ENCODE measurements at regions of chr1 and their contacts with region 1.

Region 1: DNA sequence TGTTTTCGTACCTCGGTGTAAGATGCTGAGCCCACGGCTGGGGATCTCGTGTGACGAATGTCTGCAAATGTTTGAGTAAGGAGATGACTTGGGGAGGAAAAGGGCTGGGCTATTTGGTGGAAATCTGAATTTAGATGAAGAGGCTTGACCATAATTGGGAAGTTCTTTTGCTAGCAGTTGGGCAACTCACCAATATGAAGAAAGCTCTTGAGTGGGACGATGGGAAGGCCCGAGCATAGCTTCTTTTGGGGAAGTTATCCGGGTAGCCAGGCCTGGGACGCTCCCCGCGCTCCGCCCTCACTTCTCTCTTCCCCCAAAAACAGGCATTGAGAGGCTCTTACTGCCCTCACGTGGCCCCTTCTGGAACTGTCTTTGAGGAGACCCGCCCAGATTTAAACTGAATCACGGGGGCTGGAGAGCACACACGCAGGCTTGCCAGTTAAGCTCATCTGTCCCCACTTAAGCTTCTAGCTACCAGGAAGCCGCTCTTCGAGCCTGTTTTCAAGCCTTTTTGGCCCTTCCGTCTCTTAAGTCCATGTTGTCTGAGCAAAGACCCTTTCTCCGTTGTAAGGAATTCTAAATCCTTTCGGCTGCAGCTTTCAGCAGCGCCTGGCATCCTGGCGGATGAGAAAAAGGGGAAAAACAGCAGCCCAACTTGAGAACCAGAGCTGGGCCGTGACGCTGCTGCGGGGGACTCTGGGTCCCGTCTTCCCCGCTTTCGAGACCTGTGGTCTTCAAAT is 93.1 kb downstream of the NID1 start:
- DNase-seq: peak; percentile 80
- ATAC-seq: peak; percentile 98
- H3K4me3 Mint-ChIP-seq: peak overlapping the region; percentile 78
- H3K27ac Mint-ChIP-seq: peak overlapping the region; percentile 96
- H3K4me1 Mint-ChIP-seq: peaks cover 19% of the 10 kb centered on the region
- H3K27me3 Mint-ChIP-seq: no peaks in the 10 kb centered on the region
- CTCF ChIP-seq: no peak

Region 2: GRCh38 chr1:235767795-235768194 is 203.9 kb before region 1 on chr1:
- CTCF ChIA-PET with region 1: interaction called, 12 read pairs
- POLR2A ChIA-PET with region 1: interaction called, 3 read pairs
- intact Hi-C with region 1: loop called (anchors 5 kb)
- DNase-seq: no peak
- ATAC-seq: peak; percentile 89
- H3K4me3 Mint-ChIP-seq: no peak overlapping the region
- H3K27ac Mint-ChIP-seq: no peak overlapping the region
- H3K4me1 Mint-ChIP-seq: peaks cover 20% of the 10 kb centered on the region
- H3K27me3 Mint-ChIP-seq: no peaks in the 10 kb centered on the region
- CTCF ChIP-seq: no peak

Region 3: GRCh38 chr1:235809688-235810397 is 161.9 kb before region 1 on chr1:
- CTCF ChIA-PET with region 1: interaction called, 16 read pairs
- POLR2A ChIA-PET with region 1: no interaction called
- intact Hi-C with region 1: no loop called
- DNase-seq: no peak
- ATAC-seq: no peak
- H3K4me3 Mint-ChIP-seq: no peak overlapping the region
- H3K27ac Mint-ChIP-seq: no peak overlapping the region
- H3K4me1 Mint-ChIP-seq: no peaks in the 10 kb centered on the region
- H3K27me3 Mint-ChIP-seq: no peaks in the 10 kb centered on the region
- CTCF ChIP-seq: no peak

Region 4: GRCh38 chr1:235843461-235843961 is 128.2 kb before region 1 on chr1:
- CTCF ChIA-PET with region 1: interaction called, 62 read pairs
- POLR2A ChIA-PET with region 1: interaction called, 14 read pairs
- intact Hi-C with region 1: loop called (anchors 1 kb)
- DNase-seq: no peak
- ATAC-seq: peak; percentile 60
- H3K4me3 Mint-ChIP-seq: no peak overlapping the region
- H3K27ac Mint-ChIP-seq: peak overlapping the region; percentile 62
- H3K4me1 Mint-ChIP-seq: peaks cover 86% of the 10 kb centered on the region
- H3K27me3 Mint-ChIP-seq: no peaks in the 10 kb centered on the region
- CTCF ChIP-seq: no peak

Region 5: DNA sequence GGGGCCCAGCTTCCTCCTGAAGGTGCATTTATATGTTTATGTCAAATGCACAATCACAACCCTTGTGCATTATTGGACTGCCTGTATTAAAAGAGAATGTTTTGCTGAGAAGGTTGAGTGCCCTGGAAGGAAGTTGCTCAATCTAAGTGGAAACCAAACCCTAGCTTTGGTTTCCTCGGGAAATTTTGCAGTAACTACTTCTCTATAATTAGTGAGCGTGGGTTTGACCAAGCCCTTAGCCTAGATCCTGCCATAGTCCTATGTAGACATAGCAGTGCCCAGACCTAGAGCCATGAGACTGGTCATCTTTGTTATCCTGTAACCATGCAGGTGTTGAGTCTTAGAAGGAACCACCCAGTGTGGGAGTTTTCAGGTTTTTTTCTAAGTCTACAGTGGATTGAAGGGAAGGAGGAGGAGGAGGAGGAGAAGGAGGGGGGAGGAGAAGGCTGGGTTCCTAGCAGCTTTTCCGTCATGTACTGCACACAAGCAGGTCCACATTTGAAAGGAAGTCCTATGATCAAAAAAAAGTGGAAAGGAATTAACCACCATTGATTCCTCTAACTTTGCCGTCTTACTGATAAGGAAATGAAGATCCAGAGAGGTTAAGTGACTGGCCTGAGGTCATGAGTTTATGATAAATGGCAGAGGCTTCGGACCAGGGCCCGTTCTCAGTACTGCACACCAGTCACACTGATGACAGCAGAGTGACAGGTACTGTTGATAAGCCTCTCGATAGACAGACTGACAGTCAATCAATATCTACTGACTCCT is 32.8 kb before region 1 on chr1:
- CTCF ChIA-PET with region 1: interaction called, 19 read pairs
- POLR2A ChIA-PET with region 1: interaction called, 6 read pairs
- intact Hi-C with region 1: no loop called
- DNase-seq: no peak
- ATAC-seq: peak; percentile 80
- H3K4me3 Mint-ChIP-seq: peak overlapping the region; percentile 76
- H3K27ac Mint-ChIP-seq: peak overlapping the region; percentile 86
- H3K4me1 Mint-ChIP-seq: peaks cover 90% of the 10 kb centered on the region
- H3K27me3 Mint-ChIP-seq: no peaks in the 10 kb centered on the region
- CTCF ChIP-seq: no peak

Region 6: DNA sequence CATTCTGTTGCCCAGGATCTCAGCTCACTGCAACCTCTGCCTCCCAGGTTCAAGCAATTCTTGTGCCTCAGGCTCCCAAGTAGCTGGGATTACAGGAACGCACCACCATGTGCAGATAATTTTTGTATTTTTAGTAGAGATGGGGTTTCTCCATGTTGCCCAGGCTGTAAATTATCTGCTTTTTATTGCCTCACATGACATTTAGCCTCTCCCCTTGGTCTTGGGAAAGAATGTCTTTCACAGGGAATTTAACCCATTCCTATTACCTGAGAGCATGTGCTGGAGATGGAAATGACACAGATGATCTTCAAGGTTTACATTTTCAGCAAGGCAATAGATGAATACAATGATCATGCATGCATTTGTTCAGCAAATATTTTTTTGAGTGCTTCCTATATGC is 17.4 kb after region 1 on chr1:
- CTCF ChIA-PET with region 1: no interaction called
- POLR2A ChIA-PET with region 1: no interaction called
- intact Hi-C with region 1: no loop called
- DNase-seq: no peak
- ATAC-seq: no peak
- H3K4me3 Mint-ChIP-seq: no peak overlapping the region
- H3K27ac Mint-ChIP-seq: no peak overlapping the region
- H3K4me1 Mint-ChIP-seq: no peaks in the 10 kb centered on the region
- H3K27me3 Mint-ChIP-seq: no peaks in the 10 kb centered on the region
- CTCF ChIP-seq: no peak

Region 7: DNA sequence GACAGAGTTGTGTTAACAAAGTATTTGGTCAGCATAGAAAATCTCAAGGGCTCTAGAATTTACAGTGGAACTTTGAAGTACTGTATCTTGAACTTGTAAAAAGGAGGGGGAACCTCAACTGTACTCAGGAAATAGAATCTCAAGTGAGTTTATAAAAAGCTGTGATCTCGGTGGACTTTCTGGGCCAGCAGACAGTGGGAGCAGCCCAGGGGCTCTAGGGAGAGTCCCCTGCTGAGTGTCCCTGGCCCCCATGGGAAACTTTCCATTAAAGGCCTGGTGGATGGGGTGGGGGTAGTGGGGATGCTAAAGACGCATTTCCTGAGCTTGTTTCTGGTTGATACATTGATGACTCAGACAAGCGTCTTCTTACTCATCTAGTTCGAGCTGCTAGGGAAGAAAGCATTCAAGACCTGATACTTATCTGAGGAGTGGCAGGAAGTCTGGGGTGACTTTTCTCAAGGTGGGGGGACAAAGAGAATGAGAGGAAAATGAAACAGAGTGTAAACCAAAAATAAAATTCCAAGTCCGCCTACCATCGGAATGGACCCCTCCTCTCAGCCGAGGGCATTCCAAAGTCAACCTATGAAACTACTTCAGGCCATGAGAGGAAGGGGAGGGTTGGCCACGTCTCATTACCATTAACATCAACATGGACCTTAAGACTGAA is 27.7 kb after region 1 on chr1:
- CTCF ChIA-PET with region 1: interaction called, 8 read pairs
- POLR2A ChIA-PET with region 1: interaction called, 6 read pairs
- intact Hi-C with region 1: loop called (anchors 1 kb)
- DNase-seq: no peak
- ATAC-seq: peak; percentile 89
- H3K4me3 Mint-ChIP-seq: peak overlapping the region; percentile 58
- H3K27ac Mint-ChIP-seq: peak overlapping the region; percentile 89
- H3K4me1 Mint-ChIP-seq: peaks cover 15% of the 10 kb centered on the region
- H3K27me3 Mint-ChIP-seq: peaks cover 3% of the 10 kb centered on the region
- CTCF ChIP-seq: no peak

Region 8: DNA sequence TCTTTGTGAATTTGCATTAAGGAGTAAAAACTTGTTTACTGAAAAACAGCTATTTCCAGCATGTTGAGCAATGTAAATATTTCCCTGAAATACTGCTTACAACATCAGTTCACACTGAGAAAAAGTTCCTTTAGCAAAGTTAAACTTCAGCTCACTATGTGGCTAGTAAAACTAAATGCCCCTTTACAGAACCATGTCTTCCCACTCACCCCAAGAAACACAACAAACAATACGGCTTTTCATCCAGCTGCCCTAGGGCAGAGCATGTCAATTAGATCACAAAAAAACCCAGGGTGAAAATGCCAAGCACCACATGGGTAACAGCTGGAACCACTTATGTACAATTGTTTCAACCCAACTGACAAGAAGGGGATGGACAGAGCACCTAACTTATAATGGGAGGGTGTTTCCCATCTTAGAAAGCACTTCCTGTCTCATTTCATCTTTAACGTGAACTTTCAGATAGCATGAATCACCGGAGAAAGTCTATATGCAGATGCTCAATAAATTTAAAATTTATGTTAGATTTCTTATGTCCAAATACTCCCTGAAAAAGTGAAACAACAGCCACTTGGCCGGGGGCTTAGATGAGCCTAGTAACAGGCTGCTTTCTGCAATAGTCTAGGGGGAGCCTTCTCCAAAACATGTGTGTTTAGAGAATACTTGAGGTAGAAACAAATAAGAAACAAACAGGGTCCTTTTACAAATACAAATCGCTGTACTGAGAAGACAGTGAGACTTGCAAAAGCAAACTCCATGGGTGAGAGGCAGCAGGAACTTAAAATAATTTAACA is 86.6 kb after region 1 on chr1:
- CTCF ChIA-PET with region 1: no interaction called
- POLR2A ChIA-PET with region 1: no interaction called
- intact Hi-C with region 1: no loop called
- DNase-seq: no peak
- ATAC-seq: peak; percentile 10
- H3K4me3 Mint-ChIP-seq: no peak overlapping the region
- H3K27ac Mint-ChIP-seq: no peak overlapping the region
- H3K4me1 Mint-ChIP-seq: peaks cover 7% of the 10 kb centered on the region
- H3K27me3 Mint-ChIP-seq: peaks cover 20% of the 10 kb centered on the region
- CTCF ChIP-seq: no peak

Measured in activated B cell treated with CpG ODN at 0.5 μM for 24 hours (primary cell).